ENCODE measurements at regions of chr13 and their contacts with region 1.

Region 1: GRCh38 chr13:113208424-113209335 is at the start of gene PCID2:
- DNase-seq: peak; percentile 73

Region 2: DNA sequence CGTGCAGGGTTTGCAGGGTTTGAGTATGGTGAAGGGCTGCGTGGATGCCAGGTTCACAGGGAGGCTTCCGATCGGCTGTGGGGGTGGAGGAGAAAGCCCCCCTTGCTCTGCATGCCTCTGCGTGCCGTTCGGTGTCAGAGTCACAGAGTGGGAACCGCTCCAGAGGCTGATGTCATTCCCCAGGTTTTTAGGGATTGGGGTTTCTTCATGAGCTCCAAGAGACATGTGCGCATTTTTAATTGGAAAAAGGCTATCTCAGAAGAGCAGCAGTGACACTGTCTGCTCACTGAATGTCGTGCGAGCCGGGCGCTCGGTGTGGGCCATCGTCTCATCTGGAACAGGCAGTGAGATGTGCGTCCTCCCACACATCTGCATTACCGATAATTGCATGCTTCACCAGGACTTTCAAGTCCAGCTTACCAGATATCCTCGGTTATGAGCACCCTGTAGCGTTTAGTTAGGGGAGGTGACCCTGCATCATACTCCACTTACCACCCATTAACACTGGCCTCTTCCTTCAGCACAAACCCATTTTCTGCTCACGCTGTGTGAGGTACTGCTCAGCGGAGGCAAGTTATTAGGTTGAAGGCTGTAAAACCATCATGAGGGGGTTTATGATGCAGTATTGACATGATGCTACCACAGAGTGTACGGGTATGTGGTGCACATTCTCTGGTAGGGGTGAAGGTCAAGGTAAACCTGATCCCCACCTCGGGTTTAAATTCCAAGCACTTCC is 238.0 kb before region 1 on chr13:
- CTCF ChIA-PET with region 1: no interaction called
- POLR2A ChIA-PET with region 1: no interaction called
- DNase-seq: no peak

Region 3: GRCh38 chr13:113122550-113123225 is 86.0 kb before region 1 on chr13 and contains the start of gene F10:
- CTCF ChIA-PET with region 1: no interaction called
- POLR2A ChIA-PET with region 1: no interaction called
- DNase-seq: no peak

Region 4: DNA sequence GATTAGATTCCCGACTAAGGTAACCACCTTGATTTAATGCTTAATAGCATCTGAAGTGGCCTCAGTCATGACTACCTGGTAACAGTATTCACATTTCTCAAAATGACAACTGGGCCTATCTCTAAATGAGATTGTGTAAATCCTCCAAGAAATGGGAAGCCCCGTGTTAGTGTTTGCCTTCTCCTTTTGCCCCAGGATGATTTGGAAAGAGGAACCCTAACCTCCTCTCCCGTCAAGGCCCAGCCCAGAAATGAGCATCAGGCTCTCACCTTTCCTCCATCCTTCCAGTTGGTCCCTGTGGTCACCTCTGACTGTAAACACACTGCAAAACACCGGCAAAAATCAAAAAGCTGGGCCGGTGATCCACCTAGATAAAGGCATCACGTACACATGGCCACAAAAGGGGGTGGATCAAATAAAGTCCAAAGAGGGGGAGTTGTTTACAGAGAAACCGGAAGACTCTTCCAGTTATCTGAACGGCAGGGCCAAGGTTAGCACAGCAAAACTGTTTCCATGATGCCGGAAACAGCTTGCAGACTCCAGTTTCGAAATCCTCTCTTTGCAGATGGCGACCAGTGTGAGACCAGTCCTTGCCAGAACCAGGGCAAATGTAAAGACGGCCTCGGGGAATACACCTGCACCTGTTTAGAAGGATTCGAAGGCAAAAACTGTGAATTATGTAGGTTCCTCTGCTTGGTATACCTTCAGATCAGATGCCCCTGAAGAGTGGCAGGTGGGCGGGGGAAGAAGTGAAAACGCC is 69.7 kb before region 1 on chr13:
- CTCF ChIA-PET with region 1: no interaction called
- POLR2A ChIA-PET with region 1: no interaction called
- DNase-seq: no peak

Region 5: GRCh38 chr13:113192902-113193301 is 15.8 kb before region 1 on chr13:
- CTCF ChIA-PET with region 1: interaction called, 3 read pairs
- POLR2A ChIA-PET with region 1: interaction called, 11 read pairs
- DNase-seq: no peak

Region 6: DNA sequence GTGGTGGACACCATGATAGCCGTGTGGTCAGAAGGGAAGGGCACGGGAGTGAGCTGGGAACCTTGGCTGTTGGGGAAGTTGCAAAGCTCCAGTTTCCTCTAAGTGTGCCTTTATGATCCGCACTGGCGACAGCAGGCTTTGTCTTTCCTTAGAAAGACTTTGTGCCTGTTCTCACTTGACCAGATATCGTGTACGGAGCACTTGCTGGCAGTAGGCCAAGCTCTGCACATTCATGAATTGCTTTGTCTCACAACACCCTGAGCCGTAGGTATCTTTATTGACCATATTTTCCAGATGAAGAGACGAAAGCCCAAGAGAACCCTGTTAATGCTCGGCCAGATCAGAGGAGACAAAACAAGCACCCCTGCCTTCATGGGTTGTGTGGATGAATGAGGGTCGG is 15.8 kb after region 1 on chr13:
- CTCF ChIA-PET with region 1: no interaction called
- POLR2A ChIA-PET with region 1: interaction called, 12 read pairs
- DNase-seq: no peak

Measured in HEK293T (cell line).